ENCODE measurements at regions of chr3 and their contacts with region 1.

Region 1: DNA sequence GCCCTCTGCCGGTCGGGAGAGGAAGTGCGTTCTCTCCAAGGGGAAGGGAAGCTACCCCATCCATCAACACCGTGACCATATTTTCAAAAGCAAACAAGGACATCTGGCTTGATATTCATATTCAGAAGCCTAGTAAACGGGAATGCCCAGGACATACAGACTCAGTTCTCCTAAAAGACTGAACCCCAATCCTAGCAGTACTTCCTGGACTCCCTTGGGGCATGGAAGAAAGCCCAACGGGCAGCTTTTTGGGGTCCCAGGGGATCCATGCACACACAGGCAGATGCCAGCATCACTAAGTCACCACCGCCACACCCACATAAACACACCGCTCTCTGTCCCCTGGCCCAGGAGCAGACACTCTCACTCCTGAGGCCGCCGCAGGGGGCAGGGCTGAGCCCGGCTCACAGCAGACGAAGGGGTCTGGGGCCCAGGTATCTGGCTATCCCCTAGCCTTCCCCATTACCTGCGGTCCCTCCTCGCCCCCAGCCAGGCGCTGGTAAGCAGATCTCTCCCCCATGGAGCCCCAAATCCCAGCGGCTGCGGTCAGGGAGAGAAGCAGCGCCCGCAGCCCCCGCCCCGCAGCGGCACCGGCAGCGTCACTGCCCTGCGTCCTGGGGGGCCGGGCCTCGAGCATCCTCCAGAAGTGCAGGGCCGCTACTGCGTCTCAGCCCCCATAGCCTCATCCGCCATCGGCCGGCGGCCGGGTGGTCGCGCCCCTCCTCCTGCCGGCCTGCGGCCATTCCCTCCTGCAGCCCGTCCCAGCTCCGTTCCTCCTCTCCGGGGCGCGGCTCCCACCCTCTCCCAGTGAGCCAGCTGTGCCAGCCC is 13.4 kb downstream of the TNK2 start:
- DNase-seq: peak; percentile 71
- ATAC-seq: peak; percentile 74
- H3K4me3 ChIP-seq: peak overlapping the region; percentile 76 to 90
- H3K27ac ChIP-seq: peak overlapping the region; percentile 84
- H3K4me1 ChIP-seq: peaks cover 19 to 41% of the 10 kb centered on the region in 2 experiments
- H3K27me3 ChIP-seq: no peaks in the 10 kb centered on the region
- CTCF ChIP-seq: peak in 2 of 3 experiments; percentile 86 to 96; a peak in 4 of 6 replicates
- POLR2A ChIP-seq: no peak
- RAD21 ChIP-seq: no peak

Region 2: GRCh38 chr3:195863121-195864006 is 31.6 kb before region 1 on chr3:
- CTCF ChIA-PET with region 1: interaction called, 53 read pairs
- POLR2A ChIA-PET with region 1: no interaction called
- RAD21 ChIA-PET with region 1: interaction called, 6 to 8 read pairs
- intact Hi-C with region 1: loop called (anchors 1 kb)
- DNase-seq: peak; percentile 42
- ATAC-seq: peak; percentile 97
- H3K4me3 ChIP-seq: no peak overlapping the region
- H3K27ac ChIP-seq: peak overlapping the region; percentile 25; the same call in 1 of the 2 replicates
- H3K4me1 ChIP-seq: peaks cover 0 to 21% of the 10 kb centered on the region in 2 experiments; a peak in 2 of 4 replicates
- H3K27me3 ChIP-seq: no peaks in the 10 kb centered on the region
- CTCF ChIP-seq: peak; percentile 88 to 97 (median 97)
- POLR2A ChIP-seq: no peak
- RAD21 ChIP-seq: peak; percentile 97

Region 3: GRCh38 chr3:195876297-195877031 is 18.5 kb before region 1 on chr3:
- CTCF ChIA-PET with region 1: interaction called, 19 read pairs
- POLR2A ChIA-PET with region 1: no interaction called
- RAD21 ChIA-PET with region 1: no interaction called
- intact Hi-C with region 1: no loop called
- DNase-seq: peak; percentile 78
- ATAC-seq: peak; percentile 98
- H3K4me3 ChIP-seq: peak overlapping the region; percentile 26 to 40
- H3K27ac ChIP-seq: peak overlapping the region; percentile 46
- H3K4me1 ChIP-seq: peaks cover 21 to 49% of the 10 kb centered on the region in 2 experiments
- H3K27me3 ChIP-seq: no peaks in the 10 kb centered on the region
- CTCF ChIP-seq: no peak
- POLR2A ChIP-seq: no peak
- RAD21 ChIP-seq: no peak

Region 4: DNA sequence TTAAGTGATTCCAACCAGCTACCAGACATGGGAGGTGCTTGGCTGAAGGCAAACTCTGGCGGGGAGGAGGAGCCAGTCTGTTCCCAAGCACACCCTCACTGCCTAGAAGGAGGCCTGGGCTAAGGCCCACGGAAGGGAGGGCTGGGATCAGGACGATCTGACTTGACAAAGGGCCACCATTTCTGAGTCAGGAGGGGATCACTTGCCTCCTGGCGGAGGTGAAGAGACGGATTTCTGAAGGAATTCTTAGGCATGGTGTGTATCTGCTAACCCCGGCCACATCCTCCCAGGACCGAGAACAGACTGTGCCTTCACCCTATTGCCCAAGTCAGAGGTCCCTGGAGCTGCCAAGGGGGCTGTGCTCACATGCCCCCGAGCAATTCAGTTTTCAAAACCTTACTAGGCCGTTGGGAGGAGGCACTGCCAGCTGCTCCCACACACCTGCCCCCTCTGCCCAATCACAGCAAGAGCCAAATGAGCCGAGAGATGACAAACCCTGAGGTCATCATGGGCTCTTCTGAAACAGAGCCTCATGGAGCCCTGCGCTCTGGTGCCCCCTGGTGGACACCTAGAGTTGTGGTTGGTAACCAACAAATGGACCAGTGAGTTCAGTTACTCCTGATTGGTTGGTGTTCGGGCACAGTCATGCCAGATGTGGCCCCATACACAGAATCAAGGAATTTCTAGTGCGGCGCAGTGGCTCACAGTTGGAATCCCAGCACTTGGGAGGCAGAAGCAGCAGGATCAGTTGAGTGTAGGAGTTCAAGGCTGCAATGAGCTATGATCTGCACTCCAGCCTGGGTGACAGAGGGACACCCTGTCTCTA is 19.9 kb after region 1 on chr3:
- CTCF ChIA-PET with region 1: interaction called, 37 read pairs
- POLR2A ChIA-PET with region 1: interaction called, 7 read pairs
- RAD21 ChIA-PET with region 1: interaction called in 1 of 2 experiments, 3 read pairs
- intact Hi-C with region 1: loop called (anchors 1 kb)
- DNase-seq: peak; percentile 98
- ATAC-seq: peak; percentile 93
- H3K4me3 ChIP-seq: peak overlapping the region; percentile 30 to 41
- H3K27ac ChIP-seq: peak overlapping the region; percentile 67
- H3K4me1 ChIP-seq: peaks cover 15 to 41% of the 10 kb centered on the region in 2 experiments
- H3K27me3 ChIP-seq: no peaks in the 10 kb centered on the region
- CTCF ChIP-seq: peak in 2 of 3 experiments; percentile 96 to 98; a peak in 4 of 6 replicates
- POLR2A ChIP-seq: peak; percentile 48
- RAD21 ChIP-seq: no peak

Region 5: GRCh38 chr3:196044513-196044912 is 149.5 kb after region 1 on chr3:
- CTCF ChIA-PET with region 1: no interaction called
- POLR2A ChIA-PET with region 1: no interaction called
- RAD21 ChIA-PET with region 1: no interaction called
- intact Hi-C with region 1: no loop called
- DNase-seq: no peak
- ATAC-seq: no peak
- H3K4me3 ChIP-seq: no peak overlapping the region
- H3K27ac ChIP-seq: no peak overlapping the region
- H3K4me1 ChIP-seq: no peaks in the 10 kb centered on the region
- H3K27me3 ChIP-seq: no peaks in the 10 kb centered on the region
- CTCF ChIP-seq: no peak
- POLR2A ChIP-seq: no peak
- RAD21 ChIP-seq: no peak